Breast epithelium (tissue), 4 donors: ENCODE measurements at regions of chr1 and their contacts with region 1.

Region 1: GRCh38 chr1:156082309-156083091 is at the start of gene MEX3A:
- DNase-seq: peak; percentile 68 to 75
- H3K4me3 ChIP-seq: peak within 1 kb of the TSS; percentile 89 to 95 (median 93)
- H3K27ac ChIP-seq: peak within 1 kb of the TSS; percentile 61 to 79
- H3K4me1 ChIP-seq: peaks cover 0 to 5% of the 10 kb centered on the region in 2 donors
- H3K27me3 ChIP-seq: no peaks in the 10 kb centered on the region
- CTCF ChIP-seq: no peak
- POLR2A ChIP-seq: no peak
- total RNA-seq, gene MEX3A: 0.32 to 1.3 (median 1.3) TPM

Region 2: DNA sequence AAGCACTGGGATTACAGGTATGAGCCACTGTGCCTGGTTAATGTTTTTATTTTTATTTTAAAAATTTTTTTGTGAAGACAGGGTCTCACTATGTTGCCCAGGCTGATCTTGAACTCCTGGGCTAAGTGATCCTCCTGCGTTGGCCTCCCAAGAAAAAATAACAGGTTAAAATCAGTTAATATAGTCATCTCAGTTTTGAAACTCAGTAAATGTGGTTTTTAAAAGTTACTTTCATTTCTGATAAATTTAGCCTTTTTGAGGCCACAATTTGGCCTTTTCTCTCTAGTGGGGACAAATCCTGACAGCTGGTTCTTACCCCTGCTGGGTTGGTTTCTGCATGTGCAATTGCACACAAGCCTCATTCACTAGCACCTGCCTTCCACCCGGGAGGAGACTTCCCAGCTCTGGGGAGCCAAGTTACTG is 143.6 kb after region 1 on chr1:
- intact Hi-C with region 1: loop called (anchors 10 kb)
- DNase-seq: no peak
- H3K4me3 ChIP-seq: no peak overlapping the region
- H3K27ac ChIP-seq: no peak overlapping the region
- H3K4me1 ChIP-seq: peaks cover 0 to 8% of the 10 kb centered on the region in 2 donors
- H3K27me3 ChIP-seq: no peaks in the 10 kb centered on the region
- CTCF ChIP-seq: no peak
- POLR2A ChIP-seq: no peak

Region 3: GRCh38 chr1:157124855-157125254 is 1042.4 kb after region 1 on chr1:
- intact Hi-C with region 1: no loop called
- DNase-seq: no peak
- H3K4me3 ChIP-seq: no peak overlapping the region
- H3K27ac ChIP-seq: no peak overlapping the region
- H3K4me1 ChIP-seq: no peaks in the 10 kb centered on the region
- H3K27me3 ChIP-seq: no peaks in the 10 kb centered on the region
- CTCF ChIP-seq: no peak
- POLR2A ChIP-seq: no peak